Heart right ventricle (tissue), 16 donors: ENCODE measurements at regions of chr16 and their contacts with region 1.

Region 1: DNA sequence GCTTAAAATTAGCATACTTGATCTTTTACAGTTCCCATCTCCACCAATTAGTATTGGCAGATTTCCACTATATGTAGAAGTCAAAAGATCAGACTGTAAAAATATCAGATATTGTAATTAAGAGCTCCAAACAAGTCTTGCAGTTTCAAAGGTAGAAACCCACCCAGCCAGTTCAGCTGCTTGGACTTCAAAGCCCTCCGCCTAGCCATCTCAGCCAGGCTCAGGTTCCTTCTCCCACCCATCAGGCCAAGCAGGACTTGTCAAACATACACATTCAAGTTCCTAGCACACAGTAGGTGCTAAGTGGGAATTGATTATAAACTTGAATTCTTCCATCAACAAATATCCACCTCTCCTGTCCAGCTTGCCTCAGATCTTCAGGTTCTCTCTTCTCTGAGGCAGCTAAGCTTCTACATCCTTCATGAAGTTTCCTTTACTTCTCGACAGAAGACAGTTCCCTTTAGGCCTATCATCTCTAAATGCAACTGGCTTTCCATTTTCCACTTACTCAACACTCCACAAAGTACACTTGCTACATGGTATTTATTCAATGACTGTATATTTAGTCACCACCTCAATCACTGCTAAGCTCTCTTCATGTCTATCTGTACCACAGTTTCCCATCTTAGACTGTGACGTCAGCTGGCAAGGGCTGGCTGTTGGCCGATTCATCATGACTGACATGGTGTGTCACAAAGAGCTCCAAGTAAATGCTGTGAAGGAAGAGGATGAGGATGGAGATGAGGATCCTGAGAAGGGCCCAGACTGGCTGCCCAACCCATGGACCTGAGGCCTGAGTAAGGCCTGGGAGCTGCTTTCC is 13.3 kb upstream of the COG7 start:
- DNase-seq: no peak
- ATAC-seq: peak in 4 of 8 donors; percentile 38 to 59 (median 51)
- H3K4me3 ChIP-seq: no peak overlapping the region
- H3K27ac ChIP-seq: no peak overlapping the region
- H3K4me1 ChIP-seq: peaks cover 3 to 30% (median 18%) of the 10 kb centered on the region in 9 donors
- H3K27me3 ChIP-seq: no peaks in the 10 kb centered on the region
- CTCF ChIP-seq: no peak

Region 2: GRCh38 chr16:22417019-22417418 is 1049.3 kb before region 1 on chr16:
- intact Hi-C with region 1: no loop called
- DNase-seq: no peak
- ATAC-seq: no peak
- H3K4me3 ChIP-seq: no peak overlapping the region
- H3K27ac ChIP-seq: no peak overlapping the region
- H3K4me1 ChIP-seq: no peaks in the 10 kb centered on the region
- H3K27me3 ChIP-seq: no peaks in the 10 kb centered on the region
- CTCF ChIP-seq: no peak

Region 3: GRCh38 chr16:23527961-23528643 is 61.8 kb after region 1 on chr16:
- intact Hi-C with region 1: loop called in 1 of 10 experiments (anchors 10 kb)
- DNase-seq: no peak
- ATAC-seq: peak in 6 of 8 donors; percentile 40 to 80 (median 66)
- H3K4me3 ChIP-seq: no peak overlapping the region
- H3K27ac ChIP-seq: no peak overlapping the region
- H3K4me1 ChIP-seq: peaks cover 0 to 6% (median 0%) of the 10 kb centered on the region in 9 donors
- H3K27me3 ChIP-seq: no peaks in the 10 kb centered on the region
- CTCF ChIP-seq: no peak